PC-9 (cell line): ENCODE measurements at regions of chr22 and their contacts with region 1.

Region 1: DNA sequence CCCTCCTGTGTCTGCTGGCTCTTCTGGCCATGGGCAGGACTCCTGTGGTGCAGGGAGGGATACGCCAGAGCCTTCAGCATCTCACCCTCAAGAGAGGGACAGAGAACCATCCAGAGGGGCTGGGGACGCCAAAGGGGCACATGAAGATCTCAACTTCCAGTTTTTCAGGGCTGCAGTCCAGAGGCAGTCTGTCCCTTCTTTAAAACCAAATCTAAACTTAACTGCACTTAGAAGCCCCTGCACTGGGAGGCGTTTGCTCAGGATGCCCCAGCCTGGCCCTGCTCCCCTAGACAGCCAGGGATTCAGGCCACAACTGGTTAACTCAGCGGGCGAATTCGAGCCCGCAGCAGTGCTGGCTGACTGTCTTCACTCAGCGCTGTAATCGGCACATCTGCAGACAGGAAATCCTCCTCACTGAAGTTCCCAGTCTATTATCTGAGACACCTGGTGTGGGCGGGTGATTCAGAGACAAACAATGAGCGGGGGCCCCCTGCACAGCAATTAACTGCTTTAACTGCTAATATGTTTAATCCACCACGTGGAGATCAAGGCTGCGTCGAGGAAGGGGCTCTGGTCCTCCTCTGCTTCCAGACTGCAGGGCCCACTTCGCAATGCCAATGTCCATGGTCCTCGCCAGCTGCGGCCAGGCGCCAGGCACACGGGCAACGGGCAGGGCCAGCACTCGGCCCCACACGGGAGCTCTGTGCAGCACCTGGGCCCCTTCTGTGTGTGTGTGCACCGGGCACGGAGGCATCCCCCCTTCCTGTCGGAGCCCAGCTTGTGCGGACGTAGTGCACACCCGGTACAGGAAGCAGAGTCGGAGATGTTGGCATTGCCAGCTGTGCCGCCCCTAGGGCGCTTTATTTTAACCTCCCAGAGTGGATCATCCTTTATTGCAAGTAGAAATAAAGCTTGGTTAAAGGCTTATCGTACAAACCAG is 36.9 kb upstream of the GNB1L start:
- DNase-seq: peak in 1 of 2 experiments; percentile 38
- H3K4me3 ChIP-seq: no peak overlapping the region
- H3K27ac ChIP-seq: no peak overlapping the region
- H3K4me1 ChIP-seq: peaks cover 12% of the 10 kb centered on the region
- H3K27me3 ChIP-seq: no peaks in the 10 kb centered on the region
- CTCF ChIP-seq: no peak

Region 2: GRCh38 chr22:19766511-19767426 is 124.8 kb before region 1 on chr22:
- CTCF ChIA-PET with region 1: no interaction called
- POLR2A ChIA-PET with region 1: no interaction called
- intact Hi-C with region 1: loop called (anchors 10 kb)
- DNase-seq: peak in 1 of 2 experiments; percentile 54
- H3K4me3 ChIP-seq: peak overlapping the region; percentile 48; the same call in 1 of the 2 replicates
- H3K27ac ChIP-seq: no peak overlapping the region
- H3K4me1 ChIP-seq: peaks cover 7% of the 10 kb centered on the region; the same call in 1 of the 2 replicates
- H3K27me3 ChIP-seq: peaks cover 29% of the 10 kb centered on the region
- CTCF ChIP-seq: peak; percentile 46; the same call in 1 of the 2 replicates

Region 3: GRCh38 chr22:19879695-19880506 is 11.7 kb before region 1 on chr22:
- CTCF ChIA-PET with region 1: no interaction called
- POLR2A ChIA-PET with region 1: no interaction called
- intact Hi-C with region 1: loop called (anchors 1 kb)
- DNase-seq: no peak
- H3K4me3 ChIP-seq: no peak overlapping the region
- H3K27ac ChIP-seq: no peak overlapping the region
- H3K4me1 ChIP-seq: peaks cover 25% of the 10 kb centered on the region
- H3K27me3 ChIP-seq: no peaks in the 10 kb centered on the region
- CTCF ChIP-seq: no peak